ENCODE measurements at regions of chr7 and their contacts with region 1.

Region 1: DNA sequence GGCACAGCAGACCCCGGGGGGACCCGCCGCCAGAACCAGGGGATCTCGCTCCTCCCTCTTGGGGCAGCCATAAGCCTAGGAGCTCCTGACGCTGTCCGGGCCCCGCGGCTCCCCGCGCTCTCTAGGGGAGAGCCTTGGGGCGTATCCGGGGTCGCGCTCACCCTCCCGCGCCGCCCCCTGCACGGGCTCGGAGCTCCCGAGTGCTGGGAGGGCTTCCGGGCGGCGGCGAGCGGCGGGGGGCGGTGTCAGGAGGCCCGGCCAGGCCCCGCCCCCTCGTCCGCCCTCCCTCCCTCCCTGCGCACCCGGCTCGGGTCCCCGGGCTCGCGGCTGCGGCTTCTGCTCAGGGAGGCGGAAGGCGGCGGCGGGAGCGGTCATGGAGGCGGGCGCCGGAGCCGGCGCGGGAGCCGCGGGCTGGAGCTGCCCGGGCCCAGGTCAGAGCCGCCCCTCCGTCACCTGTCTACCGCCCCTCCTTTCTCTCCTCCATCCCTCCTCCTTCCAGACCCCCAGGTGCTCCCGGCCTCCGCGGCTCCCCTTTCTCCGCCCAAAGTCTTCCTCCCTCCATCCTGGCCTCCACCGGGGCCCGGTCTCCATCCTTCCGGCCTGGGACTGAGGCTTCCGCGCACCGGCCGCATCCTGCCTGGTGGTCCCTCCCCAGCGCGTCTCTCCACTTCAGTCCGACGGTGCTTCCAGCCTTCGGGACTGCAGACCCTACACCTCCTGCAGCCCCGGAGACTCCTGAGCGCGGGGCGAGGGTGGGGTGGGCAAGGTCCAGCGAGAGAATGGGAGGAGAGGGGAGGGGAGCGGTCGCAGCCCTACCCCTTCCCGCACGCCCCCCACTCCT is 427 bp upstream of the CCDC136 start:
- DNase-seq: peak in 41 of 42 donors; percentile 55 to 87 (median 77)

Region 2: DNA sequence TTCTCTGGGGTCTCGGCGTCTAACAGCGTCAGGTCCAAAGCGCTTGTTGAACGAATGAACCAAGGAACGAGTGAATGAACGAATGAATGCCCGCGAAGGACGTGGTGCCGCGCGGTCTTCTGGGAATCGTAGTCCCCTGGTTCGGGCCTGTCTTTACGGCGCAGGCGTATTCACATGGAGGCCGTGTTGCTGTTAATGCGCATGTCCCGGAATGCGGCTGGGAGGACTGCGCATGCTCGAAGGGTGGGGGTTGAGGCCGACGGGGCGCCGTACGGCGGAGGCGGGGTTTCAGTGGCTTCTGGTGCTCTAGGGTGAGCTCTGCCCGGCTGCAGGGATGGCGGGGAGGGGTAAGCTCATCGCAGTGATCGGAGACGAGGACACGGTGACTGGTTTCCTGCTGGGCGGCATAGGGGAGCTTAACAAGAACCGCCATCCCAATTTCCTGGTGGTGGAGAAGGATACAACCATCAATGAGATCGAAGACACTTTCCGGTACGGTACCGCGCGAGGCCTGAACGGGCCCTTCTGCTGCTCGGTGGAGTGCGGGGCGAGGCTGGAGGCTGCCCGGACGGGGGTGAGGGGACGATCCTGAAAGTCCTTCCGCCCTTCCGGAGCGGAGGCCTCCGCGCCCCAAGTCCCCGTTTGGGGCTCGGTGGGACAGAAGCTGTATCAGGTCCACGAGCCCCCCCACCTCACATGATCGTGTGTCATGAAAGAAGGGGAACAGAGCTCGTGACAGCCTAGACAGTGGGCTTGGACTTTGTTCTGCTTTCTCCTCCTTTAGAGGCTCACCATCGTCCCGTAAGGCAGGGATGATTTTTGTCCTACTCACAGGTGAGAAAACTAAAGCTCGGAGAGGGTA is 71.5 kb after region 1 on chr7 and contains the start of gene ATP6V1F:
- intact Hi-C with region 1: loop called (anchors 10 kb)
- DNase-seq: peak; percentile 87 to 98 (median 94)